Naive thymus-derived CD4-positive, alpha-beta T cell (primary cell): ENCODE measurements at regions of chr6 and their contacts with region 1.

Region 1: GRCh38 chr6:125790358-125791150 is at the start of gene NCOA7:
- DNase-seq: peak; percentile 69 to 84 (median 81)
- ATAC-seq: peak; percentile 89
- H3K4me3 ChIP-seq: peak within 1 kb of the TSS; percentile 80
- H3K4me3 Mint-ChIP-seq: peak within 1 kb of the TSS; percentile 86 to 98 (median 93)
- H3K27ac ChIP-seq: peak within 1 kb of the TSS; percentile 96
- H3K27ac Mint-ChIP-seq: peak within 1 kb of the TSS; percentile 97 to 100 (median 98)
- H3K4me1 ChIP-seq: peaks cover 28 to 37% of the 10 kb centered on the region in 2 donors
- H3K4me1 Mint-ChIP-seq: peaks cover 29 to 60% (median 51%) of the 10 kb centered on the region in 7 donors
- H3K27me3 ChIP-seq: no peaks in the 10 kb centered on the region
- H3K27me3 Mint-ChIP-seq: no peaks in the 10 kb centered on the region
- total RNA-seq, gene NCOA7: 30.6 to 55.6 (median 38.0) TPM

Region 2: DNA sequence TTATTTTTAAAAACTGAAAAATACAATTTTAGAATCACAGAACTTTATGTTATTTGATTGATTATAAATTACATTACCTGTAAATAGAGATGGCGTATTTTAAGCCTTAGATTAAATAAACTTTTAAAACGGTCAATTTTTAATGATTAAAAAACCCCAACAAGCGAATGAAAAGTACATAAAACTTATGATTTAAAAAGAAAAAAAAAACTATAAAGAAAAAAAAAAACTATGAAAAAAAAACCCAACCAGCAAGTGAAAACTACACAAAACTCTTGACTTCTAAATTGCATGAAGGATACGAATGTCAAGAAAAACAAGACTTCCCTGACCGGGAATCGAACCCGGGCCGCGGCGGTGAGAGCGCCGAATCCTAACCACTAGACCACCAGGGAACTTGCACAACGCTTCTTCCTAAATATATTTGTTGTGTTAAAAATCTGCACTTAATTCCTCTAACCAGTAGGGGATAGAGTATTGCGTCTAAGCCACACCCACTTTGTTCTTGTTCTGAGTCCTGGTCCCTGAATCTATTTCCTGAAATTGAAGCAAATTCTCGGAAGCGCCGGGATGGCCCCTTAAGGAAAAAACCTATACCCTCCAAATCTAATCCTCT is 10.5 kb before region 1 on chr6:
- CTCF ChIA-PET with region 1: interaction called, 60 read pairs
- POLR2A ChIA-PET with region 1: interaction called, 356 read pairs
- intact Hi-C with region 1: loop called (anchors 1 kb)
- DNase-seq: peak; percentile 83 to 96 (median 94)
- ATAC-seq: peak; percentile 89
- H3K4me3 ChIP-seq: peak overlapping the region; percentile 84
- H3K4me3 Mint-ChIP-seq: no peak overlapping the region
- H3K27ac ChIP-seq: peak overlapping the region; percentile 77
- H3K27ac Mint-ChIP-seq: no peak overlapping the region
- H3K4me1 ChIP-seq: peaks cover 4 to 19% of the 10 kb centered on the region in 2 donors
- H3K4me1 Mint-ChIP-seq: peaks cover 5 to 27% (median 22%) of the 10 kb centered on the region in 7 donors
- H3K27me3 ChIP-seq: no peaks in the 10 kb centered on the region
- H3K27me3 Mint-ChIP-seq: peaks cover 0 to 28% (median 0%) of the 10 kb centered on the region in 5 donors

Region 3: DNA sequence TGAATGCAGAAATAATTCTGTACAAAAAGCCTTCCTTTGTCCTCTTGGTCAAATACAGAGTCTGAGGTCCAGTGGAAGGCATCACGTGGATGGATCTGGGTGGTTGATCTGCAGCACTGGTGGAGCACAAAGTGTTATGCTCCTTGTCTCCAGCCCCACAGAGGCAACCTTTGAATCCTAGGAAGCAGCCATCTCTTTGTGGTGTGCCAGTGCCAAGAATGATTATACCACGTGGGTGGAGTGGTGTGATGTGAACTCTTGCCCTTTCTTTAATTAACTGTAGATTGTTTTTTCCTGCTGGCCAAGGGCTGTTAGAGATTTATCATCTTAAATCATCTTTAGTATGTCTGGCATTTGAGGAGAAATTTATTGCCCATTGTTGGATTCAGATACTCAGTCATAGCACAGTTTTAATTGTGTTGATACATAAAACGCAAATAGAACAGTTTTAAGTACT is 31.3 kb after region 1 on chr6:
- CTCF ChIA-PET with region 1: no interaction called
- POLR2A ChIA-PET with region 1: interaction called, 81 read pairs
- intact Hi-C with region 1: no loop called
- DNase-seq: no peak
- ATAC-seq: no peak
- H3K4me3 ChIP-seq: no peak overlapping the region
- H3K4me3 Mint-ChIP-seq: no peak overlapping the region
- H3K27ac ChIP-seq: no peak overlapping the region
- H3K27ac Mint-ChIP-seq: no peak overlapping the region
- H3K4me1 ChIP-seq: peaks cover 0 to 8% of the 10 kb centered on the region in 2 donors
- H3K4me1 Mint-ChIP-seq: peaks cover 13 to 40% (median 21%) of the 10 kb centered on the region in 7 donors
- H3K27me3 ChIP-seq: no peaks in the 10 kb centered on the region
- H3K27me3 Mint-ChIP-seq: no peaks in the 10 kb centered on the region

Region 4: GRCh38 chr6:125858427-125859320 is 68.1 kb after region 1 on chr6:
- CTCF ChIA-PET with region 1: interaction called, 6 read pairs
- POLR2A ChIA-PET with region 1: interaction called, 4 read pairs
- intact Hi-C with region 1: loop called in 1 of 2 experiments (anchors 1 kb)
- DNase-seq: peak in 3 of 9 donors; percentile 10 to 26 (median 23)
- ATAC-seq: peak; percentile 52
- H3K4me3 ChIP-seq: no peak overlapping the region
- H3K4me3 Mint-ChIP-seq: no peak overlapping the region
- H3K27ac ChIP-seq: no peak overlapping the region
- H3K27ac Mint-ChIP-seq: peak overlapping the region in 1 of 9 donors; percentile 79
- H3K4me1 ChIP-seq: no peaks in the 10 kb centered on the region
- H3K4me1 Mint-ChIP-seq: peaks cover 0 to 7% (median 3%) of the 10 kb centered on the region in 7 donors
- H3K27me3 ChIP-seq: no peaks in the 10 kb centered on the region
- H3K27me3 Mint-ChIP-seq: no peaks in the 10 kb centered on the region

Region 5: GRCh38 chr6:125918681-125919566 is 128.4 kb after region 1 on chr6:
- CTCF ChIA-PET with region 1: interaction called, 3 read pairs
- POLR2A ChIA-PET with region 1: interaction called, 7 read pairs
- intact Hi-C with region 1: loop called in 1 of 2 experiments (anchors 1 kb)
- DNase-seq: peak in 7 of 9 donors; percentile 4 to 68 (median 40)
- ATAC-seq: peak; percentile 95
- H3K4me3 ChIP-seq: peak overlapping the region; percentile 34
- H3K4me3 Mint-ChIP-seq: peak overlapping the region in 9 of 10 donors; percentile 27 to 98 (median 70)
- H3K27ac ChIP-seq: peak overlapping the region; percentile 68
- H3K27ac Mint-ChIP-seq: peak overlapping the region; percentile 80 to 95 (median 87)
- H3K4me1 ChIP-seq: peaks cover 10 to 11% of the 10 kb centered on the region in 2 donors
- H3K4me1 Mint-ChIP-seq: peaks cover 15 to 60% (median 21%) of the 10 kb centered on the region in 7 donors
- H3K27me3 ChIP-seq: no peaks in the 10 kb centered on the region
- H3K27me3 Mint-ChIP-seq: no peaks in the 10 kb centered on the region

Region 6: GRCh38 chr6:125974214-125974866 is 183.8 kb after region 1 on chr6:
- CTCF ChIA-PET with region 1: interaction called, 9 read pairs
- POLR2A ChIA-PET with region 1: interaction called, 13 read pairs
- intact Hi-C with region 1: loop called in 1 of 2 experiments (anchors 1 kb)
- DNase-seq: peak in 6 of 9 donors; percentile 11 to 56 (median 43)
- ATAC-seq: peak; percentile 80
- H3K4me3 ChIP-seq: no peak overlapping the region
- H3K4me3 Mint-ChIP-seq: peak overlapping the region in 3 of 10 donors; percentile 24 to 54 (median 32)
- H3K27ac ChIP-seq: no peak overlapping the region
- H3K27ac Mint-ChIP-seq: peak overlapping the region in 7 of 9 donors; percentile 5 to 80 (median 46)
- H3K4me1 ChIP-seq: no peaks in the 10 kb centered on the region
- H3K4me1 Mint-ChIP-seq: peaks cover 3 to 13% (median 11%) of the 10 kb centered on the region in 7 donors
- H3K27me3 ChIP-seq: no peaks in the 10 kb centered on the region
- H3K27me3 Mint-ChIP-seq: no peaks in the 10 kb centered on the region

Region 7: DNA sequence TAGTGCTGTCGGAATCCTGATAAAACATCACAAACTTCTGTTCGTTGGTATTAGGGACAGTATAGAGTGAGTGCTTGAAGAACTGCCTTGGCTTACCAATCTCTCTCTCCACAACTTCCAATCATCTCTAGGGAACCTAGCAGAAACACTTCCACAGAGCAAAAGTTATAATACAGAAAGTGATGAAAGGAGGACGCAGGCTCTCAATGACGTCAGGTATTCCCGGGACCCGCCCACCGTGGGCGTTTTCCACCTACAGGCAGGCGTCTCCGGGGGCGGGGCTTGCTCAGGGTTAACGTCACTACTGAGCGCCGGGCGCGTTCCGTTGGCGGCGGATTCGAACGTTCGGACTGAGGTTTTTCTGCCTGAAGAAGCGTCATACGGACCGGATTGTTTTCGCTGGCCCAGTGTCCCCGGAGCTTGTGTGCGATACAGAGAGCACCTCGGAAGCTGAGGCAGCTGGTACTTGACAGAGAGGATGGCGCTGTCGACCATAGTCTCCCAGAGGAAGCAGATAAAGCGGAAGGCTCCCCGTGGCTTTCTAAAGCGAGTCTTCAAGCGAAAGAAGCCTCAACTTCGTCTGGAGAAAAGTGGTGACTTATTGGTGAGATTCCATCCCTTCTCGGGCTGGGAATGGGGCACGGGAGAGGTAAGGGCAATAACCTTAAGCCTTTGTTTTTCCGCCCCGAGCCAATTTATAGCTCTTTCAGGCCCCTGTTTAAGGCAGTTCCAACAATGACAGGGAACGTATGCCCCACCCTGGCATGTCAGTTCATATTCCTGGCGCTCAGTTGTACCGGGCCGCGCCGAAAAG is 549.4 kb after region 1 on chr6 and contains the start of gene CENPW:
- CTCF ChIA-PET with region 1: no interaction called
- POLR2A ChIA-PET with region 1: no interaction called
- intact Hi-C with region 1: loop called (anchors 2 kb)
- DNase-seq: peak; percentile 84 to 96 (median 87)
- ATAC-seq: peak; percentile 98
- H3K4me3 ChIP-seq: peak within 1 kb of the TSS; percentile 80
- H3K4me3 Mint-ChIP-seq: no peak within 1 kb of the TSS
- H3K27ac ChIP-seq: peak within 1 kb of the TSS; percentile 33
- H3K27ac Mint-ChIP-seq: no peak within 1 kb of the TSS
- H3K4me1 ChIP-seq: peaks cover 6 to 12% of the 10 kb centered on the region in 2 donors
- H3K4me1 Mint-ChIP-seq: peaks cover 5 to 21% (median 12%) of the 10 kb centered on the region in 7 donors
- H3K27me3 ChIP-seq: no peaks in the 10 kb centered on the region
- H3K27me3 Mint-ChIP-seq: no peaks in the 10 kb centered on the region
- total RNA-seq, gene CENPW: 1.2 to 37.1 (median 3.9) TPM